ENCODE measurements at regions of chr11 and their contacts with region 1.

Region 1: DNA sequence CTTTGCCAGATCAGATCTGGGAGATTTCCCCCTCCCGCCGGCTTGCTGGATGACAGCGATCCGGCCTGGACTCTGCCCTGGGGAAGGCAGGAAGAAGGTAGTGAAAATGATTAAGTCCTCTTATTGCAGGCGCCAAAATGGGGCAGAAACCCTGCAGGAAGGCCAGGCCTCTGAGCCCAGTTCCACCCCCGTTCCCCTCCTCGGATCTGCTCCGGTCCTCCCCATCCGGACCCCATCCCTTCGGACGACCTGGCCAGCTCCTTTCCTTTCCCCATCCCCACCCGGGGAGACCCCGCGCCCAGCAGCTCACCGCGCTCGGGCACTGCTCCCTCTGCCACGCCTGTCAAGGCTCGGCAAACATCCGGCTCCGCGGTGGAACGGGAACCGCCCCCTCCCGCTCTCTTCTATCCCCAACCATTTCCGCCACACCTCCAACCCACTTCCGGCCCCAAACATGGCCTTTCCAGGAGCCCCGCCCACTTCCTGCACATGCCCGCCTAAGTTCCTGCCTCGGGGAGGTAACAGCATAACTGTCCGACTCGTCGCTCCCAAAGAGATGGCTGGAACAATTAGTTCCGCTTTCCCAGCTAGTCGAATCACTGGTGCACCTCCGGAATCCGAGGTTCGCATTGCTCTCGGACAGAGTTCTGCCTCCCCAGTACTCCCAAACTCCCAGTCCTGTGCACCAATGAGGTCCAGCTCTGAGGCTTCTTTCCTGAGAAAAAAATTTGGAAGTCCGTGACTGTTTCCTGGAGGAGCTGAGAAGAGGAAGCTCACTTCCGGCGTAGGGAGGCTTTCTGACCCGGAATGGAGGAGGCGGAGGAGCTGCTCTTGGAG is at the starts of genes ARHGAP1 and ZNF408:
- DNase-seq: peak; percentile 97 to 99 (median 99)
- H3K4me3 ChIP-seq: peak within 1 kb of the TSS; percentile 59 to 82 (median 68)
- H3K4me3 Mint-ChIP-seq: peak within 1 kb of the TSS; percentile 96 to 98
- H3K27ac ChIP-seq: peak within 1 kb of the TSS; percentile 64 to 84
- H3K27ac Mint-ChIP-seq: peak within 1 kb of the TSS; percentile 91 to 99 (median 98)
- H3K4me1 ChIP-seq: peaks cover 23 to 46% of the 10 kb centered on the region in 2 donors
- H3K4me1 Mint-ChIP-seq: peaks cover 40% of the 10 kb centered on the region
- H3K27me3 ChIP-seq: no peaks in the 10 kb centered on the region
- H3K27me3 Mint-ChIP-seq: peaks cover 0 to 3% (median 0%) of the 10 kb centered on the region in 3 donors
- CTCF ChIP-seq: no peak
- polyA plus RNA-seq, gene ARHGAP1: 31.6 to 59.3 (median 44.1) TPM
- polyA plus RNA-seq, gene ZNF408: 4.1 to 4.5 (median 4.2) TPM

Region 2: DNA sequence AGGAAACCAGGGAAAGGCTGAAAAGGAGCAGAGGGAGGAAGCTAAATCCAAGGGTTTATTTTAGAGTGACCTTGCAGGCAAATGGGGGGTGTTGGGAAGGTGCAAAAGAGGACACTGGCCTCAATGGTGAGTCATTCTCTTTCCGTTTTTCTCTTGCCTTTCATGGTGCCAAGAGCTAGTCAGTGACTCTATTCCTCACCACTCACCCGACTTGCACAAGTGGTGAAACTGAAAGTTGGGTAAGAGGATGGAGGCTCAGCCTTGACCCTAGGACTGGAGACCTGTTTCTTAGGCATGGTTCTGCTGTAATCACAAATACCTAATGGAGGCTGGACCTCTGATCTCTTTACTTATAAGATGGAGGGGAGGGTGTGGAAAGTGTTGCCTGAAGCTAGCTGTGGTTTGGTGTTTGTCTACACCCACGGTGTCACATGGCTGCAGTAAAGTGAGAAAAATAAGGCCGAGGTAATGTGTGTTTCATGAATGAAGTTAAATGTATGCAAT is 490.3 kb before region 1 on chr11:
- intact Hi-C with region 1: no loop called
- DNase-seq: peak; percentile 90 to 96 (median 92)
- H3K4me3 ChIP-seq: peak overlapping the region in 1 of 3 experiments; percentile 24
- H3K4me3 Mint-ChIP-seq: peak overlapping the region; percentile 61 to 63
- H3K27ac ChIP-seq: peak overlapping the region in 1 of 2 donors; percentile 64
- H3K27ac Mint-ChIP-seq: peak overlapping the region; percentile 18 to 95 (median 87)
- H3K4me1 ChIP-seq: peaks cover 10 to 19% of the 10 kb centered on the region in 2 donors
- H3K4me1 Mint-ChIP-seq: peaks cover 21% of the 10 kb centered on the region
- H3K27me3 ChIP-seq: no peaks in the 10 kb centered on the region
- H3K27me3 Mint-ChIP-seq: peaks cover under 1 to 9% (median 3%) of the 10 kb centered on the region in 3 donors
- CTCF ChIP-seq: no peak

Region 3: GRCh38 chr11:46669711-46670139 is 30.7 kb before region 1 on chr11:
- intact Hi-C with region 1: loop called in 1 of 2 experiments (anchors 2 kb)
- DNase-seq: peak; percentile 23 to 31 (median 25)
- H3K4me3 ChIP-seq: no peak overlapping the region
- H3K4me3 Mint-ChIP-seq: no peak overlapping the region
- H3K27ac ChIP-seq: peak overlapping the region; percentile 94 to 95
- H3K27ac Mint-ChIP-seq: peak overlapping the region; percentile 81 to 99 (median 97)
- H3K4me1 ChIP-seq: peaks cover 51 to 54% of the 10 kb centered on the region in 2 donors
- H3K4me1 Mint-ChIP-seq: peaks cover 54% of the 10 kb centered on the region
- H3K27me3 ChIP-seq: no peaks in the 10 kb centered on the region
- H3K27me3 Mint-ChIP-seq: no peaks in the 10 kb centered on the region
- CTCF ChIP-seq: peak; percentile 67

Region 4: GRCh38 chr11:46736615-46737014 is 36.2 kb after region 1 on chr11:
- intact Hi-C with region 1: no loop called
- DNase-seq: no peak
- H3K4me3 ChIP-seq: no peak overlapping the region
- H3K4me3 Mint-ChIP-seq: no peak overlapping the region
- H3K27ac ChIP-seq: no peak overlapping the region
- H3K27ac Mint-ChIP-seq: no peak overlapping the region
- H3K4me1 ChIP-seq: no peaks in the 10 kb centered on the region
- H3K4me1 Mint-ChIP-seq: no peaks in the 10 kb centered on the region
- H3K27me3 ChIP-seq: no peaks in the 10 kb centered on the region
- H3K27me3 Mint-ChIP-seq: peaks cover 1 to 4% (median 2%) of the 10 kb centered on the region in 3 donors
- CTCF ChIP-seq: no peak

Region 5: GRCh38 chr11:46936138-46937110 is 236.0 kb after region 1 on chr11 and contains the start of gene CSTPP1:
- intact Hi-C with region 1: loop called in 1 of 2 experiments (anchors 5 kb)
- DNase-seq: peak; percentile 81 to 90 (median 87)
- H3K4me3 ChIP-seq: peak within 1 kb of the TSS; percentile 44 to 85 (median 52)
- H3K4me3 Mint-ChIP-seq: peak within 1 kb of the TSS; percentile 91 to 97
- H3K27ac ChIP-seq: peak within 1 kb of the TSS in 1 of 2 donors; percentile 37
- H3K27ac Mint-ChIP-seq: peak within 1 kb of the TSS in 6 of 7 donors; percentile 70 to 91 (median 84)
- H3K4me1 ChIP-seq: peaks cover 10 to 12% of the 10 kb centered on the region in 2 donors
- H3K4me1 Mint-ChIP-seq: peaks cover 13% of the 10 kb centered on the region
- H3K27me3 ChIP-seq: no peaks in the 10 kb centered on the region
- H3K27me3 Mint-ChIP-seq: peaks cover 0 to 2% (median 2%) of the 10 kb centered on the region in 3 donors
- CTCF ChIP-seq: no peak
- polyA plus RNA-seq, gene CSTPP1: 4.5 to 6.5 (median 5.9) TPM

Region 6: GRCh38 chr11:47176328-47177228 is 476.1 kb after region 1 on chr11 and contains the start of gene ARFGAP2:
- intact Hi-C with region 1: loop called in 1 of 2 experiments (anchors 10 kb)
- DNase-seq: peak; percentile 93 to 96 (median 94)
- H3K4me3 ChIP-seq: peak within 1 kb of the TSS; percentile 77 to 94 (median 93)
- H3K4me3 Mint-ChIP-seq: peak within 1 kb of the TSS; percentile 95 to 98
- H3K27ac ChIP-seq: peak within 1 kb of the TSS; percentile 90 to 95
- H3K27ac Mint-ChIP-seq: peak within 1 kb of the TSS; percentile 96 to 99 (median 98)
- H3K4me1 ChIP-seq: peaks cover 24 to 29% of the 10 kb centered on the region in 2 donors
- H3K4me1 Mint-ChIP-seq: peaks cover 22% of the 10 kb centered on the region
- H3K27me3 ChIP-seq: no peaks in the 10 kb centered on the region
- H3K27me3 Mint-ChIP-seq: peaks cover 0 to 2% (median 1%) of the 10 kb centered on the region in 3 donors
- CTCF ChIP-seq: no peak
- polyA plus RNA-seq, gene ARFGAP2: 59.7 to 129 (median 61.0) TPM

Measured in CD14-positive monocyte (primary cell).